ENCODE measurements at regions of chr7 and their contacts with region 1.

Region 1: GRCh38 chr7:31398815-31399214 is 58.3 kb upstream of the NEUROD6 start:
- DNase-seq: no peak
- ATAC-seq: no peak
- H3K4me3 ChIP-seq: no peak overlapping the region
- H3K27ac ChIP-seq: no peak overlapping the region
- H3K4me1 ChIP-seq: no peaks in the 10 kb centered on the region
- H3K27me3 ChIP-seq: no peaks in the 10 kb centered on the region
- CTCF ChIP-seq: no peak
- EP300 ChIP-seq: no peak
- POLR2A ChIP-seq: no peak
- RAD21 ChIP-seq: no peak

Region 2: GRCh38 chr7:31340603-31341002 is 58.2 kb before region 1 on chr7 and contains the start of gene NEUROD6:
- CTCF ChIA-PET with region 1: no interaction called
- POLR2A ChIA-PET with region 1: no interaction called
- in situ Hi-C with region 1: no loop called
- intact Hi-C with region 1: loop called (anchors 2 kb)
- DNase-seq: no peak
- ATAC-seq: no peak
- H3K4me3 ChIP-seq: no peak within 1 kb of the TSS
- H3K27ac ChIP-seq: no peak within 1 kb of the TSS
- H3K4me1 ChIP-seq: no peaks in the 10 kb centered on the region
- H3K27me3 ChIP-seq: peaks cover 2 to 11% of the 10 kb centered on the region in 2 experiments; a peak in 2 of 5 replicates
- CTCF ChIP-seq: no peak
- EP300 ChIP-seq: no peak
- POLR2A ChIP-seq: no peak
- RAD21 ChIP-seq: no peak
- total RNA-seq, gene NEUROD6: not detected in 2 replicates

Region 3: DNA sequence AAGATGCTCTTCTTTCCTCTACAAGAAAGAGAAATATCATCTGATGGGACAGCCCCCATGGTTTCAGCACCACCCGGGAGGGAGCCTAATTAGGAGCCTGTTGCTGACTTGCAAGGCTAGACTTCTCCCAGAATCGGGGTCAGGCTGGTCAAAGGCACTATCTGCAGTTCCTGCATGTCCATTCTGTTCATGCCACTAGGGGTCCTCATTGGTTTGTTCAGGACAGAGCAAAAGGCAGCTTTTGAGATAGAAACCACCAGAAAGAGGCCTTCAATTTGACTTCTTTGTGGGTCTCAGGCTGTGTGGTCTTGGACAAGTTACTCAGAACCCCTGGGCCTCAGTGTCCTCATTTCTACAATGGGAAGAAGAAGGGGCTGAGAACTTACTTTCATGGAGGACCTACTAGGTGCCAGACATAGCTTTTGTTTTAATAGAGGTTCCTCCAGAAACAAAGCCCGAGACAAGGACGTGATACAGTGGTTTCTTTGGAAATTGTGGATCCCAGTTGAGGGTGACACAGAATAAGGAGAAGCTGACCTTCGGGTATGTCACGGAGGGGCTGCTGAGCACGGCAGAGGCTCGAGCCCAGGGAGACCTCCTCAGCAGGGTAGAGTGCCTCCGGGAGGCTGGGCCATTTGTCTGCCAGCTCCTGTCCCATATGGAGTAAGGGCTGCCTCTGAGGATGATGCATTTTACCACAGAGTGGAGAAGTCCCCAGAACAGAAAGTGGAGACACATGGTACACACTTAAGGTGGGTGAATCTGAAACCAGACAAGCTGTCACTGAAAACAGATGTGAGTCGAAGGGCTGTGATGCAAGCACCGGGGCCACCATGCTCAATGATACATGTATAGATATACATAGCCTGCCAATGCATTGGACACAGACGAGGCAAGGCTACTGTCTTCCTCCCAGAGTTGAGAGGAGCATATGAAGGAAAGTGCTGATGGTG is 25.2 kb before region 1 on chr7:
- CTCF ChIA-PET with region 1: no interaction called
- POLR2A ChIA-PET with region 1: no interaction called
- in situ Hi-C with region 1: no loop called
- intact Hi-C with region 1: no loop called
- DNase-seq: peak; percentile 34
- ATAC-seq: peak; percentile 96
- H3K4me3 ChIP-seq: no peak overlapping the region
- H3K27ac ChIP-seq: no peak overlapping the region
- H3K4me1 ChIP-seq: no peaks in the 10 kb centered on the region
- H3K27me3 ChIP-seq: peaks cover 0 to 8% of the 10 kb centered on the region in 2 experiments; a peak in 1 of 5 replicates
- CTCF ChIP-seq: peak; percentile 64
- EP300 ChIP-seq: no peak
- POLR2A ChIP-seq: no peak
- RAD21 ChIP-seq: no peak

Measured in HepG2 (cell line).